ENCODE measurements at regions of chr9 and their contacts with region 1.

Region 1: DNA sequence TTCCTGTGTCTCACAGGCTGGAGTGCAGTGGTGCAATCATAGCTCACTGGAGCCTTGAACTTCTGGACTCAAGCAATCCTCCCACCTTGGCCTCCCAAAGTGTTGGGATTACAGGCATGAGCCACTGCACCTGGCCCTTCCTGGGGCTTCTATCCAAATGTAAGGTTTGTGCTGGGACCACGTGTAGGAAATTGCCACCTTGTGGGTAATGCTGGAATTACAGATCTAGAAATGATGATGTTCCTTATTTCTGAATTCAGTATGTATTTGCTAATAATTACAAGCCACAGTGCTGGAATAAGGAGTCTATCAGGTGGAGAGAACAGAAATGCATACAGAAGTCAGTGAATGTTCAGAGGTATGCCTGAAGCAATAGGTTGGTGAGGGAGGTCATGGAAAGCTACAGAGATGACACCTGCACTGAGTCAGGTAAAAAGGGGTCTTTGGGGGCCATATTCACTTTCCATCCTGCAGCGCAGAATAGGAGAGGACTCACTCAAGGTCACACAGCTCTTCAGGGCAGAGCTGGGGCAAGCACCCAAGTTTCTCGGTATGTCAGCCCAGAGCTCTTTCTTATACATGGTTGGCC is 8.8 kb upstream of the IGFBPL1 start:
- DNase-seq: no peak
- H3K4me3 ChIP-seq: no peak overlapping the region
- H3K27me3 ChIP-seq: no peaks in the 10 kb centered on the region
- CTCF ChIP-seq: peak; percentile 63

Region 2: GRCh38 chr9:37903647-37904444 is 529.2 kb before region 1 on chr9 and contains the start of gene SLC25A51:
- CTCF ChIA-PET with region 1: no interaction called
- POLR2A ChIA-PET with region 1: no interaction called
- DNase-seq: peak; percentile 44
- H3K4me3 ChIP-seq: peak within 1 kb of the TSS; percentile 84
- H3K27me3 ChIP-seq: no peaks in the 10 kb centered on the region
- CTCF ChIP-seq: peak; percentile 98
- polyA plus RNA-seq, gene SLC25A51: 15.6 and 24.4 TPM in 2 replicates

Region 3: GRCh38 chr9:38417003-38417945 is 15.7 kb before region 1 on chr9:
- CTCF ChIA-PET with region 1: interaction called, 36 read pairs
- POLR2A ChIA-PET with region 1: no interaction called
- DNase-seq: no peak
- H3K4me3 ChIP-seq: no peak overlapping the region
- H3K27me3 ChIP-seq: peaks cover 13% of the 10 kb centered on the region
- CTCF ChIP-seq: peak; percentile 45

Region 4: GRCh38 chr9:38478211-38478610 is 45.2 kb after region 1 on chr9:
- CTCF ChIA-PET with region 1: no interaction called
- POLR2A ChIA-PET with region 1: no interaction called
- DNase-seq: no peak
- H3K4me3 ChIP-seq: no peak overlapping the region
- H3K27me3 ChIP-seq: no peaks in the 10 kb centered on the region
- CTCF ChIP-seq: no peak